ENCODE measurements at regions of chr11 and their contacts with region 1.

Region 1: GRCh38 chr11:67265633-67266423 is 445 bp upstream of the GRK2 start:
- DNase-seq: peak; percentile 67 to 83
- H3K4me3 ChIP-seq: peak overlapping the region in 1 of 2 donors; percentile 14
- H3K27ac ChIP-seq: peak overlapping the region; percentile 81 to 88
- H3K4me1 ChIP-seq: peaks cover 17 to 27% of the 10 kb centered on the region in 2 donors
- H3K27me3 ChIP-seq: no peaks in the 10 kb centered on the region
- CTCF ChIP-seq: peak; percentile 72 to 97 (median 89)
- POLR2A ChIP-seq: no peak

Region 2: GRCh38 chr11:67303132-67303834 is 37.5 kb after region 1 on chr11 and contains the start of gene SSH3:
- intact Hi-C with region 1: loop called (anchors 5 kb)
- DNase-seq: peak; percentile 64 to 66
- H3K4me3 ChIP-seq: peak within 1 kb of the TSS; percentile 64 to 75
- H3K27ac ChIP-seq: peak within 1 kb of the TSS; percentile 71 to 84
- H3K4me1 ChIP-seq: no peaks in the 10 kb centered on the region
- H3K27me3 ChIP-seq: no peaks in the 10 kb centered on the region
- CTCF ChIP-seq: peak in 1 of 4 experiments; percentile 19
- POLR2A ChIP-seq: peak in 1 of 2 donors; percentile 58
- total RNA-seq, gene SSH3: 7.7 to 48.8 (median 19.1) TPM

Region 3: DNA sequence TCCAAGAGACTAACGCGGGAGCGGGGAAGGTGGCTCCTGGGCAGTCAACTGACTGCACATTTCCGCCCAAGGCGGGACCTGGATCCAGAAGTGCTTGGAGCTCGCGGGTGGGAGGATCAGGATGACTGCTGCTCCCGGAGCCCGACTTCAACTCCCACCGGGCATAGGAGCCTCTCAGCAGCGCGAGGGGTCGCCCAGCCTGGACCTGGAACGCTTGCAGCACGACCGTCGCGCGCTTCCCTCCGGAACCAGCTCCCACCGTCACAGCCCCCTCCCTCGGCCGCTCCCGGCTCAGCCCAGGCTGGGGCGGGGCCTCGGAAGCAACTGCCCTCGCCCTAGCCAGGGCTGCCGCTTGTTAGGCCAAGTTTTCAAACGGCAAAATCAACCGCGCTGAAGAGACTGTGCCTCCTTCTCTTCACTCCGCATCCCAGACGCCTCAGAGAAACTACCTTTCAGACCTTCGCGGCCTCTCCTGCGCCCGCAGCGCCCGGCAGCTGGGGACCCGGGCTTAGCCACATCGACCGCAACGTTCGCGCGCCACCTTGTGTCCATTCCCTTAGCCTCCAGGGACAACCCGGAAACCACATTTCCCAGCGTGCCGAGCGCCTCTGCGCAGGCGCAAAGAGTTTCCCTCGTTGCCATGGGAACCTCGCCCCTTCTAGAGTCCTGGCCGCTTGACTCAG is 51.5 kb after region 1 on chr11:
- intact Hi-C with region 1: loop called (anchors 5 kb)
- DNase-seq: peak; percentile 96 to 97
- H3K4me3 ChIP-seq: peak overlapping the region; percentile 57 to 89
- H3K27ac ChIP-seq: peak overlapping the region; percentile 91 to 99
- H3K4me1 ChIP-seq: peaks cover 0 to 6% of the 10 kb centered on the region in 2 donors
- H3K27me3 ChIP-seq: no peaks in the 10 kb centered on the region
- CTCF ChIP-seq: peak; percentile 98 to 100 (median 99)
- POLR2A ChIP-seq: peak; percentile 9 to 51

Region 4: DNA sequence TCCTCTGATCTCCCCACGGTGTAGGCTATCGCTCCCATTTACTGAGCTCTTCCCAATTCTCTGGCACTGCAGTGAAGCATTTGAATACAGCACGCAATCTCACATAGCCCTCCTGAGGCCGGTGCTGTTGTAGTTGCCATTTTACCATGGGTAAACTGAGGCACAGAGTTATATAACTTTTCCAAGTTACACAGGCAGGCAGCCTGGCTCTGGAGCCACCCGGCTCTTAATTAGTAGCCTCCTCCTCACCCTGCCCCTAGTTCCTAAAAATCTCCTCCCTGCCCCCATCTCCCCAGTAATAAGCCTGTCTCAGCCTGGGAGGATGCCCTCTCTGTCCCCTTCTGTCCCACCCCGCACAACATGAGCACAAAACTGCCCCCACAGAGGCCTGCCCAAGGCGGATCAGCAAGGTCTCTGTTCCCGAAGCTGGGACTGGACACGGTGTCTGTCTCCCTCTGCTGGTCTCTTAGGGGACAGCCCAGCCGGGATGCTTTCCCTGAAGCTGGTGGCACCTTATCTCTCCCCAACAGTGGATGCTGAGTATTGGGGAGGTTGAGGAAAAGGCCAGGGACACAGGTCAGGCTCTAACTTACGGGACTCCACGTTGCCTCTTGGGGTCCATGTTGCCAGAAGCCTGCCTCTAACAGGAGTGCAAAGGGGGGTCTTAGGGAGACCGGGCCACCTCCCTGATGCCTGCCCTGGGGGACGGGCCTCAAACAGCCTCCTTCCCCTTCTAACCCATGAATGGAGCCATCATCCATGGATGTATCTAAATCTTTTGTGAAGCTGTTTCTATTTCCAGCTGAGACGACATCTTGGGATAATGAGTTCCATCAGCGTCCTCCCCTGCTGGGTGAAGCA is 116.7 kb after region 1 on chr11:
- intact Hi-C with region 1: loop called (anchors 10 kb)
- DNase-seq: peak; percentile 83 to 85
- H3K4me3 ChIP-seq: no peak overlapping the region
- H3K27ac ChIP-seq: no peak overlapping the region
- H3K4me1 ChIP-seq: no peaks in the 10 kb centered on the region
- H3K27me3 ChIP-seq: no peaks in the 10 kb centered on the region
- CTCF ChIP-seq: peak; percentile 97 to 98 (median 98)
- POLR2A ChIP-seq: peak in 1 of 2 donors; percentile 28